ENCODE measurements at regions of chr10 and their contacts with region 1.

Region 1: GRCh38 chr10:28381903-28382347 is 79.1 kb upstream of the MPP7 start:
- DNase-seq: peak; percentile 88
- ATAC-seq: peak; percentile 94
- H3K4me3 ChIP-seq: no peak overlapping the region
- H3K4me3 Mint-ChIP-seq: no peak overlapping the region
- H3K27ac ChIP-seq: no peak overlapping the region
- H3K27ac Mint-ChIP-seq: no peak overlapping the region
- H3K4me1 ChIP-seq: peaks cover 0 to 5% of the 10 kb centered on the region in 2 donors
- H3K4me1 Mint-ChIP-seq: peaks cover 3% of the 10 kb centered on the region
- H3K27me3 ChIP-seq: peaks cover 0 to 2% (median 0%) of the 10 kb centered on the region in 4 experiments
- H3K27me3 Mint-ChIP-seq: peaks cover 18% of the 10 kb centered on the region
- CTCF ChIP-seq: peak; percentile 98

Region 2: DNA sequence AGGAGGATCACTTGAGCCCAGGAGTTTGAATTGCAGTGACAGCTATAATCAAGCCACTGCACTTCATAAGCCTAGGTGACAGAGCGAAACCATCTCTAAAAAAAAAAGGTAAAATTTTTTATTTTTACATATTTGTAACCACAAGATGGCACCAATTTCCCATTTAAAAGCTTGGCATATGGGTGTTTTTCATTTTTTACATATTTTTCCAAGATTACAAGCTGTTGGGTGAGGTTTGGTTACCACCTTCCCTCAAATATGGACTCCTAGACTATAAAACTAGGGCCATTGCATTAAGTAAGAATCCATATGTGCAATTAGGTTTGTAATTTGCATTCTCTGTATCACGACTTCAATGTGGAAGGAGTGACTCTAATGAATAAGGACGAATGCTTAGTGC is 1012.0 kb before region 1 on chr10:
- CTCF ChIA-PET with region 1: no interaction called
- POLR2A ChIA-PET with region 1: no interaction called
- intact Hi-C with region 1: loop called (anchors 5 kb)
- DNase-seq: peak; percentile 21
- ATAC-seq: no peak
- H3K4me3 ChIP-seq: no peak overlapping the region
- H3K4me3 Mint-ChIP-seq: no peak overlapping the region
- H3K27ac ChIP-seq: no peak overlapping the region
- H3K27ac Mint-ChIP-seq: no peak overlapping the region
- H3K4me1 ChIP-seq: peaks cover 0 to 5% of the 10 kb centered on the region in 2 donors
- H3K4me1 Mint-ChIP-seq: peaks cover 10% of the 10 kb centered on the region
- H3K27me3 ChIP-seq: no peaks in the 10 kb centered on the region
- H3K27me3 Mint-ChIP-seq: no peaks in the 10 kb centered on the region
- CTCF ChIP-seq: peak; percentile 43

Region 3: DNA sequence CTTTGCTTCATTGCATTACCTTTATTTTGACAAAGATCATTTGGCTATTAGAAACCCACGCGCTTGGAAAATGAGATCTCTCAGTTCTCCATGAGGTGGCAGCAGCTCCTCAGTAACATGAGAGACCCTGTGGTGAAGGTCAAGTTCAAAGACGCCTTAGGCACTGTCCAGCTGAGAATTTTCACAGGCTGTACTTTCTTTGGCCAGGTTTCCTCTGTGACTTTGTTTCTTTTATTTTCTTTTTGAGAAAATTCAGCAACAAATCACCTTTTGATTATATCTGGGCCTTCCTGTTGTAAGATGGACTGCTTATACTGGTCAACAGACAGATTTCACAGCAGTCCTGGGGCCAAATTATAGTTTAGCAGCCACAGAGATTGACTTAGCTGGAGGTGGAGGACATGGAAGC is 823.3 kb before region 1 on chr10:
- CTCF ChIA-PET with region 1: interaction called, 4 read pairs
- POLR2A ChIA-PET with region 1: no interaction called
- intact Hi-C with region 1: loop called (anchors 2 kb)
- DNase-seq: peak; percentile 28
- ATAC-seq: no peak
- H3K4me3 ChIP-seq: no peak overlapping the region
- H3K4me3 Mint-ChIP-seq: no peak overlapping the region
- H3K27ac ChIP-seq: no peak overlapping the region
- H3K27ac Mint-ChIP-seq: no peak overlapping the region
- H3K4me1 ChIP-seq: no peaks in the 10 kb centered on the region
- H3K4me1 Mint-ChIP-seq: no peaks in the 10 kb centered on the region
- H3K27me3 ChIP-seq: peaks cover 0 to 3% (median 0%) of the 10 kb centered on the region in 4 experiments
- H3K27me3 Mint-ChIP-seq: peaks cover 13% of the 10 kb centered on the region
- CTCF ChIP-seq: peak; percentile 48

Region 4: GRCh38 chr10:28241741-28242399 is 140.1 kb before region 1 on chr10:
- CTCF ChIA-PET with region 1: interaction called, 53 read pairs
- POLR2A ChIA-PET with region 1: interaction called, 4 read pairs
- intact Hi-C with region 1: no loop called
- DNase-seq: peak; percentile 58
- ATAC-seq: peak; percentile 64
- H3K4me3 ChIP-seq: no peak overlapping the region
- H3K4me3 Mint-ChIP-seq: no peak overlapping the region
- H3K27ac ChIP-seq: no peak overlapping the region
- H3K27ac Mint-ChIP-seq: no peak overlapping the region
- H3K4me1 ChIP-seq: no peaks in the 10 kb centered on the region
- H3K4me1 Mint-ChIP-seq: peaks cover 2% of the 10 kb centered on the region
- H3K27me3 ChIP-seq: no peaks in the 10 kb centered on the region
- H3K27me3 Mint-ChIP-seq: peaks cover 22% of the 10 kb centered on the region
- CTCF ChIP-seq: peak; percentile 99

Region 5: DNA sequence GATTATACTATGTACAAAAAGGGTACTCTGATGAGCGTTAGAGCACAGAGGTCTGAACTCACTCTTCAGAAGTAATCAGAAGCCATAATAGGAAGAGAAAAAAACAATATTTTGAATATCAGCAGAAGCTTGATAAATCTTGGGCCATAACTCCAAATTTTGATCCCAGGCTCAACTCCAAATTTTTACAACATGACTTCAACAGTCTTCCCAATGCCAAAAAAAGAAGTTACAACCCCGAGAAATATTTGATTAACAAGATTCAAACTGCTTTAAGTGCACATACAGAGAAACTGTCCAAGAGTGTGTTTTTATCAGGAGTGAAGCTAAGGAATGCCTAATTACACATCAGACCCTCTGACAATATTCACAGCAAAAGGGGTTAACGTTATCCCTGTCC is 86.6 kb before region 1 on chr10:
- CTCF ChIA-PET with region 1: interaction called, 146 read pairs
- POLR2A ChIA-PET with region 1: no interaction called
- intact Hi-C with region 1: no loop called
- DNase-seq: no peak
- ATAC-seq: no peak
- H3K4me3 ChIP-seq: no peak overlapping the region
- H3K4me3 Mint-ChIP-seq: no peak overlapping the region
- H3K27ac ChIP-seq: no peak overlapping the region
- H3K27ac Mint-ChIP-seq: no peak overlapping the region
- H3K4me1 ChIP-seq: no peaks in the 10 kb centered on the region
- H3K4me1 Mint-ChIP-seq: peaks cover 6% of the 10 kb centered on the region
- H3K27me3 ChIP-seq: no peaks in the 10 kb centered on the region
- H3K27me3 Mint-ChIP-seq: no peaks in the 10 kb centered on the region
- CTCF ChIP-seq: no peak

Region 6: DNA sequence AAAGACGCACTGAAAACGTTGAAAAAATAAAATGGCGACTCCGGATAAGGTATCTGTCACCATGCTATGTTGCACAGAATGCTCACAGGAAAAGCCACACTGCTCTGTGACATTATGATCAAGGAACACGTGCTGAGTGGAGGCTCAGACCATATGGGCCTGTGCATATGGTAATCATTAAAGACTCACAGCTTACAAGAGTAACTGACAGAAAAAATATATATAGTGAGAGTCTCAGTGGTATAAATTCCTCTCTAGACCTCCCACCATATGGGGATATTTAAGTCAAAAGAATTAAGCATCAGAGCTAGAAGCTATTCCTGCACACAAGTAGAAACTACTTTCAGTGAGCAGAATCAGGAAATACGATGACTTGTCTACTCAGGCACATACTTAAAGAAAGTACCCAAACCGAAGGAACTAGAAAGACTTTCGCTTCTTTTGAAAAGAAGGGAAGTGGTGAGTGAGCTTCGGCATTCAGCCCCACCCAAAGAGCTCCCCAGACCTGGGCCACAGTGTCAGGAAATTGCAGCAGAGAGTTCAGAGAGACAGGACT is 13.9 kb before region 1 on chr10:
- CTCF ChIA-PET with region 1: interaction called, 36 read pairs
- POLR2A ChIA-PET with region 1: no interaction called
- intact Hi-C with region 1: loop called (anchors 1 kb)
- DNase-seq: peak; percentile 85
- ATAC-seq: peak; percentile 98
- H3K4me3 ChIP-seq: peak overlapping the region in 1 of 5 experiments; percentile 9
- H3K4me3 Mint-ChIP-seq: peak overlapping the region; percentile 66
- H3K27ac ChIP-seq: peak overlapping the region; percentile 78 to 84
- H3K27ac Mint-ChIP-seq: peak overlapping the region; percentile 90
- H3K4me1 ChIP-seq: peaks cover 38 to 46% of the 10 kb centered on the region in 2 donors
- H3K4me1 Mint-ChIP-seq: peaks cover 33% of the 10 kb centered on the region
- H3K27me3 ChIP-seq: no peaks in the 10 kb centered on the region
- H3K27me3 Mint-ChIP-seq: no peaks in the 10 kb centered on the region
- CTCF ChIP-seq: no peak

Region 7: GRCh38 chr10:28604567-28605536 is 222.9 kb after region 1 on chr10:
- CTCF ChIA-PET with region 1: no interaction called
- POLR2A ChIA-PET with region 1: no interaction called
- intact Hi-C with region 1: no loop called
- DNase-seq: no peak
- ATAC-seq: no peak
- H3K4me3 ChIP-seq: no peak overlapping the region
- H3K4me3 Mint-ChIP-seq: no peak overlapping the region
- H3K27ac ChIP-seq: no peak overlapping the region
- H3K27ac Mint-ChIP-seq: no peak overlapping the region
- H3K4me1 ChIP-seq: peaks cover 0 to 3% of the 10 kb centered on the region in 2 donors
- H3K4me1 Mint-ChIP-seq: peaks cover 23% of the 10 kb centered on the region
- H3K27me3 ChIP-seq: no peaks in the 10 kb centered on the region
- H3K27me3 Mint-ChIP-seq: no peaks in the 10 kb centered on the region
- CTCF ChIP-seq: no peak

Region 8: DNA sequence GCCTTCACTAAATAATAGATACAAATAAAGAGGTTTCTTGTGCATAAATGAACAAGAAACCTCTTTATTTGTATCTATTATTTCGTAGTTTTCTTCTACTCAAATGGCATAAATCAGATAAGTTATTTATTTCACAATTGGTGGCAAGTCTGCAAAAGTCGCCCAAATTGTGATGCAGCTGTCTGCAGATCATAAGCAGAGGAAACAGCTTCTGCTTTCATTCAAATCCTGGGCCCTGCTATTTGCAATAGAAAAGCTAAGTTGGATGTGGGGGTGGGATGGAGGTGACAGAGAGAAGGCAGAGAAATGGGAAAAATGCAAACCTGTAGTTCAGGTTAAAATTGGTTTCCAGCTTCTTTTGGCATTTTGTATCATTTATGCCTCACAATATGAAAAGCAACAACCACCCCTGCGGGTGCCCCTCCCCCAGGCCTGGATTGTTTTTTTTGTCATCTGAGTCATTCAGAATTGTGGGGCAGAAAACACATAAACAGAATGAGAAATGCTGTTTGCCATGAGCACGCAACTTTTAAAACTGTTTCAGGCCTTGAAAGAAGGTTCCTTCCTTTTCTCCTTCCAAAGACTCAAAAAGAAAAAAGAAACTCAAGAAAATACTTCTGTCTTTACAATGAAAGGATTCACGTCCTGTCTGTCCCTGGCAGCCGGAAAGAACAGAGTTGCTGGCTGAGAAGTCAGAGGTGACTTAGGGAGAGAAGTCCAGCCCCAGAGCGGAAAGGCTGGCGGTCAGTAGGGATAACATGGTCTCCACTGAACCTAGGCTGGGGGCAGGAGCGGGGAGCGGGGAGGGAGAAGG is 428.3 kb after region 1 on chr10:
- CTCF ChIA-PET with region 1: no interaction called
- POLR2A ChIA-PET with region 1: no interaction called
- intact Hi-C with region 1: no loop called
- DNase-seq: no peak
- ATAC-seq: no peak
- H3K4me3 ChIP-seq: no peak overlapping the region
- H3K4me3 Mint-ChIP-seq: no peak overlapping the region
- H3K27ac ChIP-seq: no peak overlapping the region
- H3K27ac Mint-ChIP-seq: no peak overlapping the region
- H3K4me1 ChIP-seq: no peaks in the 10 kb centered on the region
- H3K4me1 Mint-ChIP-seq: no peaks in the 10 kb centered on the region
- H3K27me3 ChIP-seq: peaks cover 0 to 10% (median 5%) of the 10 kb centered on the region in 4 experiments
- H3K27me3 Mint-ChIP-seq: peaks cover 27% of the 10 kb centered on the region
- CTCF ChIP-seq: no peak